ENCODE measurements at regions of chr12 and their contacts with region 1.

Region 1: DNA sequence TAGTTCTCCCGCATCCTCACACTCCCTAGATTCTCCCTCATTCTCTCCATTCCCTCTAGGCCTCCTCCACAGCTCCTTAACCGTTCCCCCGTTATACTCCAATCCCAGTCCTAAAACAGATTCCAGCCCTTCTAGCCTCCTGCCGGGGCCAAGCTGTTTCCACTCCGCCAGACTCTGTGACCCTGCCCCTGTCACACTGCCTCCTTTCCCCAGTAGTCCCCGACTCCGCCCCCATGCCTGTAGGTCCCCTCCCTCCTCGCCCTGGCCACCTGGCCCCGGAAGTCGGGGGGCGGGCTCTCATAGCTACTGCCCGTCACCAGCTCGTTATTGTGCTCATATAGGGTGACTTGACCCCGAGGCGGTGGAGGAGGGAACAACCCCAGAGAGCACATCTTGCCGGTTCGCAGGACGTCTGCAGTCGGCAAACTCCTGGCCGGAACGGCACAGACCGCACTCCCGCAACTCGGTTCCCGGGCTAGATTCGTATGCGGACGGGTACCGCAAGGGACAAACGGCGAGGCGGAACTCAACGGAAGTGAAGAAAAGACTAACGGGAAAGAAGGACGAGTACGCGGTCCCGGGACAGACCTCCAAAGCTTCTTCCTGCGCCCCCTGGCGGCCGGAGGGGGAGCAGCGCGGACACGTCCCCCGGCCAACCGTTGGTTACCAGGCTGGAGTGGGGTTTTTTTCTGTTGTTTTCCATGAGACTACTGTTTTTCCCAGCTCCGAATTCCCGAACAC is at the start of gene AAAS:
- DNase-seq: peak; percentile 97
- ATAC-seq: peak; percentile 81
- H3K4me3 ChIP-seq: peak within 1 kb of the TSS; percentile 31 to 95 (median 87)
- H3K4me3 Mint-ChIP-seq: peak within 1 kb of the TSS; percentile 99
- H3K27ac ChIP-seq: peak within 1 kb of the TSS; percentile 73 to 84
- H3K27ac Mint-ChIP-seq: peak within 1 kb of the TSS; percentile 99
- H3K4me1 ChIP-seq: peaks cover 26 to 36% of the 10 kb centered on the region in 2 donors
- H3K4me1 Mint-ChIP-seq: peaks cover 39% of the 10 kb centered on the region
- H3K27me3 ChIP-seq: no peaks in the 10 kb centered on the region
- H3K27me3 Mint-ChIP-seq: no peaks in the 10 kb centered on the region
- CTCF ChIP-seq: peak; percentile 99
- total RNA-seq, gene AAAS: 65.1 and 68.4 TPM in 2 replicates

Region 2: DNA sequence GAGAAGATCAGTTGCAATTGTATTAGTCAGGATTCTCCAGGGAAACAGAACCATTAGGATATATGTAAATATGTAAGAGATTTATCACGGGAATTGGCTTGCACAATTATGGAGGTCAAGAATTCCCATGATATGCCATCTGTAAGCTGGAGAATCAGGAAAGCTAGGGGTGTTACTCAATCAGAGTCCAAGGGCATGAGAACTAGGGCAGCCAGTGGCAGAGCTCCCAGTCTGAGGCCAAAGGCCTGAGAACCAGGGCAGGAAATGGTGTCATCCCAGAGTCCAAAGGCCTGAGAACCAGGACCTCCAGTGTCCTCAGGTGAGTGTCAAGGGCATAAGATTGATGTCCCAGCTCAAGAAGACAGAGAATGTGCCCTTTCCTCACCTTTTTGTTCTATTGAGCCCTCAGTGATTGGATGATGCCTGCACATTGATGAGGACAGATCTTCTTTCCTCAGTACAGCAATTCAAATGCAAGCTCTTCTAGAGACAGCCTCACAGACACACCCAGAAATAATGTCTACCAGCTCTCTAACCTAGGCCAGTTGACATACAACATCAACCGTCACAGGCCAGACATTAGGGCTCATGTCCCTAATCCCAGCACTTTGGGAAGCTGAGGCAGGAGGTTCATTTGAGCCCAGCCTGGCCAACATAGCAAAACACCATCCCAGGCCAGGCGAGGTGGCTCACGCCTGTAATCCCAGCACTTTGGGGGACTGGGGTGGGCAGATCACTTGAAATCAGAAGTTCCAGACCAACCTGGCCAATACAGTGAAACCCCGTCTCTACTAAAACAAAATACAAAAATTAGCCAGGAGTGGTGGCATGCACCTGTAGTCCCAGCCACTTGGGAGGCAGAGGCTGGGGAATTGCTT is 175.6 kb before region 1 on chr12:
- CTCF ChIA-PET with region 1: no interaction called
- POLR2A ChIA-PET with region 1: no interaction called
- intact Hi-C with region 1: no loop called
- DNase-seq: no peak
- ATAC-seq: no peak
- H3K4me3 ChIP-seq: no peak overlapping the region
- H3K4me3 Mint-ChIP-seq: no peak overlapping the region
- H3K27ac ChIP-seq: no peak overlapping the region
- H3K27ac Mint-ChIP-seq: no peak overlapping the region
- H3K4me1 ChIP-seq: no peaks in the 10 kb centered on the region
- H3K4me1 Mint-ChIP-seq: no peaks in the 10 kb centered on the region
- H3K27me3 ChIP-seq: no peaks in the 10 kb centered on the region
- H3K27me3 Mint-ChIP-seq: peaks cover 9% of the 10 kb centered on the region
- CTCF ChIP-seq: no peak

Region 3: GRCh38 chr12:53180220-53180930 is 140.9 kb before region 1 on chr12 and contains the starts of genes CSAD and ZNF740:
- CTCF ChIA-PET with region 1: interaction called, 8 read pairs
- POLR2A ChIA-PET with region 1: interaction called, 10 read pairs
- intact Hi-C with region 1: loop called (anchors 1 kb)
- DNase-seq: peak; percentile 98
- ATAC-seq: peak; percentile 93
- H3K4me3 ChIP-seq: peak within 1 kb of the TSS; percentile 81 to 92 (median 86)
- H3K4me3 Mint-ChIP-seq: peak within 1 kb of the TSS; percentile 95
- H3K27ac ChIP-seq: peak within 1 kb of the TSS; percentile 87 to 89
- H3K27ac Mint-ChIP-seq: peak within 1 kb of the TSS; percentile 95
- H3K4me1 ChIP-seq: peaks cover 28 to 38% of the 10 kb centered on the region in 2 donors
- H3K4me1 Mint-ChIP-seq: peaks cover 52% of the 10 kb centered on the region
- H3K27me3 ChIP-seq: no peaks in the 10 kb centered on the region
- H3K27me3 Mint-ChIP-seq: no peaks in the 10 kb centered on the region
- CTCF ChIP-seq: no peak
- total RNA-seq, gene CSAD: 56.3 and 57.0 TPM in 2 replicates
- total RNA-seq, gene ZNF740: 117 and 131 TPM in 2 replicates

Region 4: GRCh38 chr12:53251477-53252348 is 69.5 kb before region 1 on chr12:
- CTCF ChIA-PET with region 1: interaction called, 4 read pairs
- POLR2A ChIA-PET with region 1: interaction called, 3 read pairs
- intact Hi-C with region 1: loop called (anchors 1 kb)
- DNase-seq: peak; percentile 85
- ATAC-seq: peak; percentile 81
- H3K4me3 ChIP-seq: peak overlapping the region; percentile 56 to 95 (median 88)
- H3K4me3 Mint-ChIP-seq: peak overlapping the region; percentile 99
- H3K27ac ChIP-seq: peak overlapping the region; percentile 59 to 92
- H3K27ac Mint-ChIP-seq: peak overlapping the region; percentile 96
- H3K4me1 ChIP-seq: peaks cover 44 to 52% of the 10 kb centered on the region in 2 donors
- H3K4me1 Mint-ChIP-seq: peaks cover 49% of the 10 kb centered on the region
- H3K27me3 ChIP-seq: no peaks in the 10 kb centered on the region
- H3K27me3 Mint-ChIP-seq: no peaks in the 10 kb centered on the region
- CTCF ChIP-seq: peak; percentile 42

Region 5: GRCh38 chr12:53344824-53345485 is 23.7 kb after region 1 on chr12:
- CTCF ChIA-PET with region 1: interaction called, 353 read pairs
- POLR2A ChIA-PET with region 1: interaction called, 21 read pairs
- intact Hi-C with region 1: loop called (anchors 1 kb)
- DNase-seq: peak; percentile 85
- ATAC-seq: peak; percentile 91
- H3K4me3 ChIP-seq: peak overlapping the region in 4 of 5 experiments; percentile 46 to 71 (median 66)
- H3K4me3 Mint-ChIP-seq: peak overlapping the region; percentile 100
- H3K27ac ChIP-seq: no peak overlapping the region
- H3K27ac Mint-ChIP-seq: peak overlapping the region; percentile 85
- H3K4me1 ChIP-seq: peaks cover 6 to 13% of the 10 kb centered on the region in 2 donors
- H3K4me1 Mint-ChIP-seq: peaks cover 14% of the 10 kb centered on the region
- H3K27me3 ChIP-seq: peaks cover 0 to 2% (median 0%) of the 10 kb centered on the region in 4 experiments
- H3K27me3 Mint-ChIP-seq: peaks cover 6% of the 10 kb centered on the region
- CTCF ChIP-seq: peak; percentile 72

Region 6: DNA sequence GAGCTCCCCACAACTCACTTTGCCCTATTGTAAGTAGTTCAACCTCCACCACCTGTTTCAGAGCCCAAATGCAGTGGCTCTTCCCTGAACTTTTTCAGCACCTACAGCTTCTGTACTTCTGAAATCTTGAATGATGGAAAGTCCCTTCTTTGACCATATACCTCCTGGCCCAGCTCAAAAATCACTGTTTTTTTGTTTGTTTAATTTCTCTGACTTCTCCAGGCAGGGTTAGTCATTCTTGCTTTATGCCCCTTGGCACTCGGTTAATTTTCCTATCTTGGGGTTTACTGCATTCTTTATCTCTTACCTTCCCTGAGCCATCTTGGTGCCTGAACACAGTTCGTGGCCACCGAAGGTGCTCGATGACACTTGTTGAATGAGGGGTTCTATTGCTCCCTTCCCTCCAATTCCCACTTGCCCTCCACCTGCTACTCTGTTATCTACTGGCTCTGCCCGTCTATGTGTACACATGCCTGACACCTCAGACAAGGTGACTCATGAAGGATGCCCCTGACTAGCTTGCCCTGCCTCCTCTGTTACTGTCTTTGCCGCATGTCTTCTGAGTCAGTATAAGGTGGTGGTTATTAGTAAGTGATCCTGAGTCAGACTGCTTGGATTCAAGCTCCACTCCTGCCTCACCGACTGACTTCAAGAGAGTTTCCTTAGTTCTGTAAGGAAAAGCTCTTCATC is 106.8 kb after region 1 on chr12:
- CTCF ChIA-PET with region 1: interaction called, 64 read pairs
- POLR2A ChIA-PET with region 1: no interaction called
- intact Hi-C with region 1: no loop called
- DNase-seq: no peak
- ATAC-seq: no peak
- H3K4me3 ChIP-seq: no peak overlapping the region
- H3K4me3 Mint-ChIP-seq: no peak overlapping the region
- H3K27ac ChIP-seq: no peak overlapping the region
- H3K27ac Mint-ChIP-seq: no peak overlapping the region
- H3K4me1 ChIP-seq: no peaks in the 10 kb centered on the region
- H3K4me1 Mint-ChIP-seq: no peaks in the 10 kb centered on the region
- H3K27me3 ChIP-seq: no peaks in the 10 kb centered on the region
- H3K27me3 Mint-ChIP-seq: no peaks in the 10 kb centered on the region
- CTCF ChIP-seq: no peak

Region 7: GRCh38 chr12:53492830-53493611 is 171.8 kb after region 1 on chr12:
- CTCF ChIA-PET with region 1: interaction called, 3 read pairs
- POLR2A ChIA-PET with region 1: interaction called, 3 read pairs
- intact Hi-C with region 1: loop called (anchors 2 kb)
- DNase-seq: peak; percentile 95
- ATAC-seq: peak; percentile 95
- H3K4me3 ChIP-seq: peak overlapping the region; percentile 51 to 68 (median 61)
- H3K4me3 Mint-ChIP-seq: peak overlapping the region; percentile 98
- H3K27ac ChIP-seq: peak overlapping the region; percentile 84 to 90
- H3K27ac Mint-ChIP-seq: peak overlapping the region; percentile 96
- H3K4me1 ChIP-seq: peaks cover 16 to 21% of the 10 kb centered on the region in 2 donors
- H3K4me1 Mint-ChIP-seq: peaks cover 23% of the 10 kb centered on the region
- H3K27me3 ChIP-seq: no peaks in the 10 kb centered on the region
- H3K27me3 Mint-ChIP-seq: no peaks in the 10 kb centered on the region
- CTCF ChIP-seq: no peak

Region 8: DNA sequence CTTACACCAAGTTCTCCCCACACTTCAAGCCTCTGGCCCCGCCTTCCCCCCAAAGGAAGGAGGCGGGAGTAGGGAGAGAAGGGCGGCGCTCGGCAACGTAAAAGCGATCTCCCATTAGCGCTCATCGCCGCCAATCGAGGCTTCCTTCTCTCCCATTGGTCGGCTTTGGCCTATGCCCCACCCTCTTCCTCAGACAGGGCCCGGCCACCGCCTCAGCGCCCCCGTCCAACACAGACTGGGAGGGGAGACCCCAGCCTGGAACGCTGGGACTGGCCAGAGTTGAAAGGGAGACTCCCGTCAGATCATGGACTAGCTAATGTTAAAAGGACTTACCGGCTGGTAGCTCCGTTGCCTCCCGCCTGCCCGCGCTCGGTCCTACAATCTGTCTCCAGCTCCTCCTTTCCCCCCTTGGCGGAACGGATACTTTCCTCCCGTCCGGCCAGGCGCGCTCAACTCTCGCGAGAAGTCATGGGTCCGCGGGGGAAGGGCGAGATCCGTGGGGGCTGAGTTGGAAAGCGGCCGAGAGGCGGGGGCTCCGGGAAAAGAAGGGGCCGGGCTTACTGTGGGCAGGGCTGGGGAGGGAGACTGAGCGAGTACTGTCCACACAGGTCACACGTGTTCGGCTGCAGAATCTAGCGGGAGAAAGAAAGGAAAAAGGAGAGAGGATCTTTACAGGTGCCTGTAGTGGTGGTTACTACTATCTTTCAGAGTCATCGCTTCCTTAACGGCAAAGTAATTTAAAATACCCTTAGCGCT is 304.9 kb after region 1 on chr12 and contains the start of gene ATF7:
- CTCF ChIA-PET with region 1: no interaction called
- POLR2A ChIA-PET with region 1: no interaction called
- intact Hi-C with region 1: loop called (anchors 10 kb)
- DNase-seq: peak; percentile 99
- ATAC-seq: peak; percentile 93
- H3K4me3 ChIP-seq: peak within 1 kb of the TSS; percentile 60 to 91 (median 74)
- H3K4me3 Mint-ChIP-seq: peak within 1 kb of the TSS; percentile 91
- H3K27ac ChIP-seq: peak within 1 kb of the TSS; percentile 77 to 88
- H3K27ac Mint-ChIP-seq: peak within 1 kb of the TSS; percentile 98
- H3K4me1 ChIP-seq: peaks cover 24 to 29% of the 10 kb centered on the region in 2 donors
- H3K4me1 Mint-ChIP-seq: peaks cover 46% of the 10 kb centered on the region
- H3K27me3 ChIP-seq: no peaks in the 10 kb centered on the region
- H3K27me3 Mint-ChIP-seq: no peaks in the 10 kb centered on the region
- CTCF ChIP-seq: no peak
- total RNA-seq, gene ATF7: 42.2 and 42.9 TPM in 2 replicates

Region 9: GRCh38 chr12:54650409-54650808 is 1329.2 kb after region 1 on chr12:
- CTCF ChIA-PET with region 1: no interaction called
- POLR2A ChIA-PET with region 1: no interaction called
- intact Hi-C with region 1: no loop called
- DNase-seq: no peak
- ATAC-seq: no peak
- H3K4me3 ChIP-seq: no peak overlapping the region
- H3K4me3 Mint-ChIP-seq: no peak overlapping the region
- H3K27ac ChIP-seq: no peak overlapping the region
- H3K27ac Mint-ChIP-seq: no peak overlapping the region
- H3K4me1 ChIP-seq: no peaks in the 10 kb centered on the region
- H3K4me1 Mint-ChIP-seq: no peaks in the 10 kb centered on the region
- H3K27me3 ChIP-seq: peaks cover 0 to 19% (median 4%) of the 10 kb centered on the region in 4 experiments
- H3K27me3 Mint-ChIP-seq: peaks cover 33% of the 10 kb centered on the region
- CTCF ChIP-seq: no peak